Activated CD4-positive, alpha-beta memory T cell treated with anti-CD3 and anti-CD28 coated beads, Interleukin-2, amount 10 ng/mL, durations not matched to agents 7 days and 5 days (primary cell): ENCODE measurements at regions of chr17 and their contacts with region 1.

Region 1: GRCh38 chr17:49715717-49716279 is 8.0 kb upstream of the SLC35B1 start:
- DNase-seq: peak; percentile 49
- H3K4me3 Mint-ChIP-seq: peak overlapping the region; percentile 26
- H3K27ac Mint-ChIP-seq: peak overlapping the region; percentile 90
- H3K4me1 Mint-ChIP-seq: peaks cover 53% of the 10 kb centered on the region
- H3K27me3 Mint-ChIP-seq: no peaks in the 10 kb centered on the region

Region 2: GRCh38 chr17:49739641-49740271 is 24.0 kb after region 1 on chr17:
- CTCF ChIA-PET with region 1: interaction called, 3 read pairs
- POLR2A ChIA-PET with region 1: interaction called, 100 read pairs
- DNase-seq: peak; percentile 95
- H3K4me3 Mint-ChIP-seq: peak overlapping the region; percentile 94
- H3K27ac Mint-ChIP-seq: peak overlapping the region; percentile 100
- H3K4me1 Mint-ChIP-seq: peaks cover 77% of the 10 kb centered on the region
- H3K27me3 Mint-ChIP-seq: no peaks in the 10 kb centered on the region

Region 3: DNA sequence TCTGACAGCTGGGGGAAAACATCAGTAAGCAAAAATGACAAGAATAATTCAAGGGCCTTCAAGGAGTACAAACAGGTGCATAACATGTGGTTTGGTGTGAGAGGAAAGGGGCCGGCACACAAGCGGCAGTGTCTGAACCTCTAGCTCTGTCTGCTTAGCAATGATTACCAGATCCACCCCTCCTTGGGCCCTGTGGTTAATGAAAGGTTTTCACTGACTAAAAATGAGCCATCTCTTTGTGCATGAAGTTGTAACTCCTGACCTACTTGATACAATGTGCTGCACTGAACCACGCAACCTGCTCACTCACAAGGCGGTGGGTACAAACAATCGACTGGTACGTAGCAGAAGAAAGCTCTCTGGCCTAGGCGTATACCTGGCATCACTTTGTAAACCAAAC is 33.0 kb after region 1 on chr17:
- CTCF ChIA-PET with region 1: interaction called, 8 read pairs
- POLR2A ChIA-PET with region 1: interaction called, 100 read pairs
- DNase-seq: peak; percentile 74
- H3K4me3 Mint-ChIP-seq: peak overlapping the region; percentile 51
- H3K27ac Mint-ChIP-seq: peak overlapping the region; percentile 94
- H3K4me1 Mint-ChIP-seq: peaks cover 82% of the 10 kb centered on the region
- H3K27me3 Mint-ChIP-seq: no peaks in the 10 kb centered on the region